Left ventricle myocardium superior (tissue), 1 donor: ENCODE measurements at regions of chr5 and their contacts with region 1.

Region 1: GRCh38 chr5:120055858-120056257 is 408.2 kb upstream of the PRR16 start:
- DNase-seq: no peak
- ATAC-seq: peak; percentile 54

Region 2: DNA sequence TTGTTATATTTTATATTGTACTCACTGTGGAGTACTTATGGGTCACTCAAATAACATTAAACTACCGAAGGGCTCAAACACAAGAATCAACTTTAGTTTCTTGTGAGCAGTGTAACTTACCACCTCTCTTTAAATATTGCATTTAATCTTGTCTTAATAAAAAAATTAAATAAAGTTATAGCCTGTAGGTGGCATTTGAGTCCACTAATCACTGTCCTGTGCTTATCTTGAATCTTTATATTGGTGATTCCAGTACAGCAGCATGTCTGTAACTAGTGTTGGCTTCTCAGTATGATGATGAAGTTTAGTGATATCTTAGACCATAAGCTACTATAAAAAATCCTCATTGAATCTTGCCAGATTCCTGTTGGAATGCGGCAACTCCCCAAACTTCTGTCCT is 112.7 kb before region 1 on chr5:
- intact Hi-C with region 1: loop called (anchors 10 kb)
- DNase-seq: no peak
- ATAC-seq: peak; percentile 51

Region 3: GRCh38 chr5:120457839-120458507 is 402.1 kb after region 1 on chr5:
- intact Hi-C with region 1: loop called (anchors 10 kb)
- DNase-seq: peak; percentile 90
- ATAC-seq: peak; percentile 73

Region 4: DNA sequence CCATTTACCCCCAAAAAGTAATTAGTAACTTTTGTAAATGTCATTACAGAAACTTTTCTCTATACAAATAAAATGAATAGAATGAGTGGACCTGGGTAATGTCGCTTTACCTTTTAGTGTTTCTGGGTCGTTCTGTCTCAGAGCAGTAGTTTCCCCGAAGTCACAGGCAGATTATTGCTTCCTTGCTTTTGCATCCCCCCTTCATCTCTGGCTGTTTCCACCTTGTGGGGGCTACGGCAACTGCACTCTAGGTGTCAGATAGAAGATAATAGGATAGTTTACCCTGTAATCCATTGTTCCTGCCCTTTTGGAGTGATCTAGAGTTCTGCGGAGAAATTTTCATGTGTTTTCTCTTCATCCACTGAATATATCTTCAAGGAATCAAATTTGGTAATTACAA is 477.0 kb after region 1 on chr5:
- intact Hi-C with region 1: no loop called
- DNase-seq: no peak
- ATAC-seq: no peak